ENCODE measurements at regions of chr10 and their contacts with region 1.

Region 1: GRCh38 chr10:90862908-90863514 is 5.2 kb upstream of the HTR7 start:
- DNase-seq: peak in 3 of 9 donors; percentile 7 to 28 (median 27)
- ATAC-seq: no peak
- H3K4me3 ChIP-seq: no peak overlapping the region
- H3K4me3 Mint-ChIP-seq: no peak overlapping the region
- H3K27ac ChIP-seq: no peak overlapping the region
- H3K27ac Mint-ChIP-seq: no peak overlapping the region
- H3K4me1 ChIP-seq: no peaks in the 10 kb centered on the region
- H3K4me1 Mint-ChIP-seq: peaks cover 0 to 9% (median 4%) of the 10 kb centered on the region in 7 donors
- H3K27me3 ChIP-seq: no peaks in the 10 kb centered on the region
- H3K27me3 Mint-ChIP-seq: peaks cover 28 to 89% (median 59%) of the 10 kb centered on the region in 5 donors

Region 2: GRCh38 chr10:89954787-89955566 is 908.0 kb before region 1 on chr10:
- CTCF ChIA-PET with region 1: interaction called, 4 read pairs
- POLR2A ChIA-PET with region 1: no interaction called
- intact Hi-C with region 1: loop called in 1 of 2 experiments (anchors 10 kb)
- DNase-seq: no peak
- ATAC-seq: no peak
- H3K4me3 ChIP-seq: no peak overlapping the region
- H3K4me3 Mint-ChIP-seq: no peak overlapping the region
- H3K27ac ChIP-seq: no peak overlapping the region
- H3K27ac Mint-ChIP-seq: no peak overlapping the region
- H3K4me1 ChIP-seq: no peaks in the 10 kb centered on the region
- H3K4me1 Mint-ChIP-seq: no peaks in the 10 kb centered on the region
- H3K27me3 ChIP-seq: no peaks in the 10 kb centered on the region
- H3K27me3 Mint-ChIP-seq: peaks cover 0 to 11% (median 3%) of the 10 kb centered on the region in 5 donors